Posterior vena cava (tissue), 2 donors: ENCODE measurements at regions of chr10 and their contacts with region 1.

Region 1: DNA sequence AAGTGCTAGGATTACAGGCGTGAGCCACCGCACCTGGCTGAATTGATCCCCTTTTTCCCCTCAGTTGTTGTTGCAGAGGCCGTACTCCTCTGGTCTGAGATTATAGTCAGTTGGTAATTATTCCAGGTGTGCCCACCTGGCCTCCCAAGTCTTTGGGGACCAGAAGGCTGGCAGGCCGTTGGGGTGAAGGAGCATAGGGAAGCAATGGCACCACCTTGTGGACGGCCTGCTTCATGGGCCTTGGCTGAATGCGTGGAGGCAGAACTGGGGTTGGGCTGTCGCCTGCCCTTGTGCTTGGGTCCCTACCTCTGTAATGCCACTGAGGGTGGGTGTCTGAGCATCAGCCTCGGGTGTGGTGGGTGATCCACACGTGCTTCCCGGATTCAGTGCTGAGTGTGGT is 125.7 kb downstream of the RGS10 start:
- DNase-seq: peak; percentile 89

Region 2: GRCh38 chr10:119199231-119199992 is 217.4 kb before region 1 on chr10:
- intact Hi-C with region 1: loop called in 1 of 2 experiments (anchors 5 kb)
- DNase-seq: peak; percentile 80

Region 3: DNA sequence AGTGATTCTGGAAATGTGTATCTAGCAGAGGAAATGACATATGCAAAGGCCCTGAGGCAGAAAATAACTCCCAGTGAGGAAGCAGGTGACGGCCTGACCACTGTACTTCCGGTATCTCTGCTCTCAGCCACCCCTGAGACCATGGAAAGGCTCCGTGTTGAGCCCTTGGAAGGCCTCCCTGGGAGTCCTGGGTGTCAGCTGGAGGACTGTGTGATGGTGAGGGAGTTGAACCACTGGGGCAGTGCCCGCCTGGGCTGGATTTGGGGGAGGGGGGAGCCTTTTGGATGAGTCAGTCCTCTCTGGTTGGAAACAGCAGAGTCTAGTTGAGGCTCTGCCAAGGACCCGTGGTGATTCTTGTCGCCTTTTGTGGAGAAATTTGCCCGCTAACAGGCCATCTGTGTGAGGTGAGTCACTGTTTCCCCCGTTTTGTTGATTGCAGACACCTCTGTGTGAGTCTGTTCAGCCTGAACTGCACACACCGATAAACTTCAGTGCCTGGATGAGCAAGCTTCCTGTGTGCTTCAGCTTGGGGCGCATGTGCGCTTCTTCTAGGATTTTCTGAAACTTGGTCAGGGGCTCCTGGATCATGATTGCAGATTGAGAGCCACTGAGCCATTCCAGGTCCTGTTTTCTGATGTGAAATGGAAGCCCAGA is 110.9 kb before region 1 on chr10:
- intact Hi-C with region 1: loop called in 1 of 2 experiments (anchors 10 kb)
- DNase-seq: peak; percentile 89

Region 4: DNA sequence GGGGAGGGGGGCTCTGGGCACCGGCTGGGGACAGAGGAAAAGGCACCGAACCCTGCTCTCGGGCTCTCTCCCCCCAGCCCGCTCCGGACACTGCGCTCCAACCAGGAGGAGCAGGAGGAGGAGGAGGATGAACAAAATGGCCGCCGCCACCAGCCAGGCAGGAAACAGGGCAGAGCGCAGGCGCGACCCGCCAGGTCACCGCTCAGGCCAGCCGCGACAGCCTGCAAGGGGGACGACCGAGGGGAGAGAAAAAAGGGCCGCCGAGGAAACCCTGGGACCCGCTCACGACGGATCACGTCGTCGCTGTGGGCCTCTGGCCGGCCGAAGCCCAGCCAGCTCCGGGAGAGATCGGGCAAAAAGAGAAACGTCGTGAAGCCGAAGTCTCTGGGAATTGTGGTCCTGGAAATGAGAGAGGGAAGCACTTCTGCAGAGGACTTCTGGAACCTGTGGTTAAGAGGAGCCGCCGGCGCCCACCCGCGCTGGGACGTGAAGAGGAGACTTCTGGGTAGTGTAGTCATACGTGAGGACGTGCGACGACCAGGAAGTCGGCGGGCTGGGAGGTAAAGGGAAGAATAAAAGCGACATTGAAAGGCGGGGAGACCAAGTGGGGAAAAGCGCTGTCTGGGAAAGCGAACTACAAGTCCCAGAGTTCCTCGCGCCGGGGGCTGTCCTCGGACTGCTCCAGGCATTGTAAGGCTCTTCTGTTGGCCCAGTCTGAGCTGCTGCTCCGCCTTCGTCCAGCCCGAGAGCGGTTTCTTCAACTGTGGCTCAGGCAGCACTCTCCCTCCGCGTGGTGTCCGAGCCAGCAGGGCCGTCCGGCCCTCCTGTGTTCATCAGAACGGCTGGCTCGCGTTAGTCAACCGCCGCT is 179.9 kb after region 1 on chr10 and contains the start of gene TIAL1:
- intact Hi-C with region 1: no loop called
- DNase-seq: peak; percentile 99
- total RNA-seq, gene TIAL1: 78.8 to 90.7 TPM

Region 5: GRCh38 chr10:120667276-120667675 is 1250.4 kb after region 1 on chr10:
- intact Hi-C with region 1: no loop called
- DNase-seq: no peak